ENCODE measurements at regions of chr17 and their contacts with region 1.

Region 1: DNA sequence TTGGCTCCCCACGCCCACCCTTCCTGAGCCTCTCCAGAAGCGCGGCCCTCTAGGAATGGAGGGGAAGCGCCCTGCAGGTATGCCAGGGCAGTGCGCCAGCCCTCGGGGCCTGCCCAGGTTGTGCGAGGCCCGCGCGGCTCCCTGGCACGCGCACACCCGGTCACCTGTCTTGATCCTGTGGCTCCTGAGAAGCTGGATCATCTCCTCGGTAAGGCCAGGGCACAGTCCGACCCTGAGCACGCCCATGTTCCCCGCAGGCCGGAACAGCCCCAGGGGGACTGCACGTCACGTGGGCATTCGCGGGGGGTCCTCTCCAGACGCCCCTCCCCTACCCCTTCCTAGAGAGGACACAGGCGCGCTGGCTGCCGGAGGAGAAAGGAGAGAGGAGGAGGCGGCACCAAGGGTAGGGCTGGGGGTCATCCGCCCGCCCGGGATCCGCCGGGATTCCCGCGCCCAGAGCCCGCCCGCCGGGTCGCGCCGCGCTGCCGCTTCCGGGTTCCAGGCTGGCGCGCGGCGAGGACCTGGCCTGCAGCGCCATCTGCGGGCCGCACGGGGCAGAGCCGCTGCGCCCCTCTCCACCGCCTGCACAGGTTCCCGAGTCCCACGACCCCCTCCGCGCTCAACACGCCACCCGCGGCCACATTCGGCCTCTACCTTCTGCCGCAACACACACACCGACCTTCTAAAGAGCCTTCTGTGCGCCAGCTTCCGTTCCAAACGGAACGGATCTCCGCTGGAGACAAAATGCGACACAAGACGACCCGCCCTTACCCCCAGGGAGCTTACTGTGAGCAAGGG is at the start of gene RAD51D:
- DNase-seq: peak; percentile 86 to 92 (median 90)
- ATAC-seq: peak; percentile 95
- H3K4me3 ChIP-seq: peak within 1 kb of the TSS; percentile 79
- H3K27ac ChIP-seq: peak within 1 kb of the TSS; percentile 77
- H3K4me1 ChIP-seq: peaks cover 12 to 20% of the 10 kb centered on the region in 2 experiments; a peak in 4 of 5 replicates
- H3K27me3 ChIP-seq: peaks cover 2 to 7% of the 10 kb centered on the region in 2 experiments; a peak in 2 of 5 replicates
- CTCF ChIP-seq: peak; percentile 86 to 97 (median 92)
- EP300 ChIP-seq: no peak
- POLR2A ChIP-seq: peak; percentile 71
- RAD21 ChIP-seq: peak; percentile 95 to 96
- polyA plus RNA-seq, gene RAD51D: 2.2 to 2.5 TPM

Region 2: DNA sequence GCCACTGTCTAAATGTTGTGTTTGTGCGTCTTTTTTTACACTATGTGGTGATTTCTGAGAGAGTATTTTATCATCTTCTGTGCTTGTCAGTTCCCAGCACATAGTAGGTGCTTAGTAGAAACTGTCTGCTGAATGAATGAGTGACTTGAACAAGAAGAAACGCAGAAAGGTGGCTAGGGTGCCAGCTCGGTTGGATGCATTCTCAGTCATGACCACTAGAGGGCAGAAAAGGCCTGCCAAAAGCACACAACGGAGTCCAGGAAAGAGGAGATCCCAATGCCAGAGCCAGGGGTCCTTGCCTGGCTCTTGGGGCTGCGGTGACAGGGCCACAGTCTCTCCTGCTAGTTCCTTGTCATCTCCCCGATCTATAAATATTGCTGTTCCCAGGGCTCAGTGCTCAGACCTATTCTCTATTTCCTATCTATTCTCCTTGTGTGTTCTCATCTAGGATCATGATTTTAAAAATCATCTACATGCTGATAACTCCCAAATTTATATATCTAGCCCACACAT is 699.3 kb before region 1 on chr17:
- CTCF ChIA-PET with region 1: no interaction called
- POLR2A ChIA-PET with region 1: no interaction called
- in situ Hi-C with region 1: loop called (anchors 5 kb)
- intact Hi-C with region 1: loop called (anchors 5 kb)
- DNase-seq: peak; percentile 71 to 82 (median 78)
- ATAC-seq: peak; percentile 90
- H3K4me3 ChIP-seq: no peak overlapping the region
- H3K27ac ChIP-seq: no peak overlapping the region
- H3K4me1 ChIP-seq: peaks cover 0 to 4% of the 10 kb centered on the region in 2 experiments; a peak in 1 of 5 replicates
- H3K27me3 ChIP-seq: peaks cover 7 to 22% of the 10 kb centered on the region in 2 experiments; a peak in 3 of 5 replicates
- CTCF ChIP-seq: peak; percentile 73 to 91 (median 91)
- EP300 ChIP-seq: no peak
- POLR2A ChIP-seq: no peak
- RAD21 ChIP-seq: peak; percentile 78 to 85

Region 3: GRCh38 chr17:34542700-34543336 is 576.7 kb before region 1 on chr17:
- CTCF ChIA-PET with region 1: interaction called, 18 read pairs
- POLR2A ChIA-PET with region 1: no interaction called
- in situ Hi-C with region 1: loop called (anchors 10 kb)
- intact Hi-C with region 1: loop called (anchors 5 kb)
- DNase-seq: peak; percentile 43 to 79 (median 69)
- ATAC-seq: peak; percentile 67
- H3K4me3 ChIP-seq: no peak overlapping the region
- H3K27ac ChIP-seq: no peak overlapping the region
- H3K4me1 ChIP-seq: no peaks in the 10 kb centered on the region
- H3K27me3 ChIP-seq: peaks cover 5 to 17% of the 10 kb centered on the region in 2 experiments; a peak in 3 of 5 replicates
- CTCF ChIP-seq: peak; percentile 76 to 89 (median 89)
- EP300 ChIP-seq: no peak
- POLR2A ChIP-seq: no peak
- RAD21 ChIP-seq: peak; percentile 75 to 89

Region 4: GRCh38 chr17:34980681-34981537 is 138.7 kb before region 1 on chr17:
- CTCF ChIA-PET with region 1: no interaction called
- POLR2A ChIA-PET with region 1: interaction called, 10 read pairs
- in situ Hi-C with region 1: no loop called
- intact Hi-C with region 1: no loop called
- DNase-seq: peak; percentile 85 to 97 (median 94)
- ATAC-seq: peak; percentile 88
- H3K4me3 ChIP-seq: peak overlapping the region; percentile 78
- H3K27ac ChIP-seq: peak overlapping the region; percentile 96
- H3K4me1 ChIP-seq: peaks cover 17 to 26% of the 10 kb centered on the region in 2 experiments; a peak in 4 of 5 replicates
- H3K27me3 ChIP-seq: no peaks in the 10 kb centered on the region
- CTCF ChIP-seq: peak; percentile 47 to 74 (median 67)
- EP300 ChIP-seq: no peak
- POLR2A ChIP-seq: peak; percentile 59
- RAD21 ChIP-seq: peak; percentile 7 to 13; a peak in 2 of 4 replicates

Region 5: GRCh38 chr17:35046740-35047283 is 72.8 kb before region 1 on chr17:
- CTCF ChIA-PET with region 1: no interaction called
- POLR2A ChIA-PET with region 1: no interaction called
- in situ Hi-C with region 1: no loop called
- intact Hi-C with region 1: no loop called
- DNase-seq: peak in 3 of 4 experiments; percentile 14 to 83 (median 43)
- ATAC-seq: peak; percentile 74
- H3K4me3 ChIP-seq: peak overlapping the region; percentile 23; the same call in 1 of the 2 replicates
- H3K27ac ChIP-seq: peak overlapping the region; percentile 37; the same call in 1 of the 3 replicates
- H3K4me1 ChIP-seq: peaks cover 0 to 15% of the 10 kb centered on the region in 2 experiments
- H3K27me3 ChIP-seq: no peaks in the 10 kb centered on the region
- CTCF ChIP-seq: no peak
- EP300 ChIP-seq: no peak
- POLR2A ChIP-seq: no peak
- RAD21 ChIP-seq: no peak

Region 6: DNA sequence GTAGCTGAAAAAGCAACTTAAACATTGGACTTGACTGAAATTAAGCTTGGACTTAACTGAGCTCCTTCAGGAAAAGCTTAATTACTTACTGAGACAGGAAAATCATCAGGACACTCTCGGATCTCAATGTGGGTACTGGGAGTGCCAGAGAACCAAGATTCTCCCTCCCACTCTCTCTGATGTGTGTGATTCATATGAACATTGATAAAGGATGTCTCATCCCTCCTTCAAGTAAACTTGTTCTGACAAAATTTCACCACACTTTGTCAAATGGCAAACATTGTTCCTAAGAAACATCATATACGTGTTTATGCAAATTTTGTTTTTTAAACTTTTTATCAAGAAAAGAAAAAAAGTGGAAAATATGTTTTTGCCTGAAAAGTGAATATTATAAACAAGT is 119.3 kb after region 1 on chr17:
- CTCF ChIA-PET with region 1: no interaction called
- POLR2A ChIA-PET with region 1: no interaction called
- in situ Hi-C with region 1: no loop called
- intact Hi-C with region 1: no loop called
- DNase-seq: no peak
- ATAC-seq: no peak
- H3K4me3 ChIP-seq: no peak overlapping the region
- H3K27ac ChIP-seq: no peak overlapping the region
- H3K4me1 ChIP-seq: peaks cover 3 to 12% of the 10 kb centered on the region in 2 experiments; a peak in 4 of 5 replicates
- H3K27me3 ChIP-seq: peaks cover 4 to 23% of the 10 kb centered on the region in 2 experiments; a peak in 3 of 5 replicates
- CTCF ChIP-seq: no peak
- EP300 ChIP-seq: no peak
- POLR2A ChIP-seq: no peak
- RAD21 ChIP-seq: no peak

Measured in K562 (cell line).